SK-N-SH (cell line): ENCODE measurements at regions of chr22 and their contacts with region 1.

Region 1: DNA sequence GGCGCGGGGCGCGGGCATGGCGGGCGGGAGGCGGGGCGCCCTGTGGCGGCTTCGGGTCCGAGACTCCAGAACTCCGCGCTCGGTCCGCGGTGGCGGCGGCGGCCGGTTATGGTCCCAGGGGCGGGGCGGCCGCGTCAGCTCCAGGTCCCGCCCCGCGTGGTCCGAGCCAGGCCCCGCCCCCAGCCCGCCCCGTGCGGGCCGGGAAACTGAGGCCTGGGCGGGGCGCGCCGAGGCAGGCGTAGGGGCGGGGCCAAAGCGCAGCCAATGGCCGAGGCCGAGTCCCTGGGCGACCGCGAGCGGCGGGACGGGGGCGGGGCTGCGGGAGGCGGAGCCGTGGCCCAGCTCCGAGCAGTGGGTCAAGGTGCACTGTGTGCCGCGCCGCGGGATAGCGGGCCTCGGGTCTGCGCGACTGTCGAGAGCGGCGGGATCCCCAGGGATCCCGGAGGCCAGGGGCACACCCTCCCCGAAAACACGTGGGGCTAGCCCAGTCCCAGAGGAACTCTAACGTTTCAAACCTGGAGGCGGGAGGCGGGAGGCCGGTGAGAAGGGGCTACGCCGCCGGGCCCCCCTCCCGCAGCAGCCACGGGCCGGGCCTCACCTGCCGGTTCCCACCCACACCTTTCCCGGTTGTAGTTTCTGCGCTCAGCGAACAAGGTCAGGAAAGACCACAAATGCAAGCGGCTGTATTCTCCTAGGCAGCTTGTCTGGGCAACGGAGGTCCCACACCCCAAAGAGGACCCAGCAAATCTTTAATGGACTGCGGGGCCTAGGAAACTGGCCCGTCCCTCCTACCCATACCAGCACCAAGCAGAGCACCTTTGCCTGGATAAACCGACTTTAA is at the start of gene SLC25A1:
- DNase-seq: peak; percentile 97
- H3K4me3 ChIP-seq: peak within 1 kb of the TSS; percentile 80 to 84
- H3K27ac ChIP-seq: peak within 1 kb of the TSS; percentile 37 to 89; a peak in 3 of 4 replicates
- H3K4me1 ChIP-seq: peaks cover 16 to 44% of the 10 kb centered on the region in 2 experiments; a peak in 3 of 4 replicates
- H3K27me3 ChIP-seq: no peaks in the 10 kb centered on the region
- CTCF ChIP-seq: no peak
- EP300 ChIP-seq: no peak
- RAD21 ChIP-seq: no peak
- polyA plus RNA-seq, gene SLC25A1: 34.2 and 44.7 TPM in 2 replicates

Region 2: GRCh38 chr22:19097518-19097917 is 81.4 kb before region 1 on chr22:
- CTCF ChIA-PET with region 1: no interaction called
- POLR2A ChIA-PET with region 1: no interaction called
- DNase-seq: no peak
- H3K4me3 ChIP-seq: no peak overlapping the region
- H3K27ac ChIP-seq: no peak overlapping the region
- H3K4me1 ChIP-seq: no peaks in the 10 kb centered on the region; a peak in 1 of 4 replicates
- H3K27me3 ChIP-seq: no peaks in the 10 kb centered on the region
- CTCF ChIP-seq: no peak
- EP300 ChIP-seq: no peak
- RAD21 ChIP-seq: no peak

Region 3: DNA sequence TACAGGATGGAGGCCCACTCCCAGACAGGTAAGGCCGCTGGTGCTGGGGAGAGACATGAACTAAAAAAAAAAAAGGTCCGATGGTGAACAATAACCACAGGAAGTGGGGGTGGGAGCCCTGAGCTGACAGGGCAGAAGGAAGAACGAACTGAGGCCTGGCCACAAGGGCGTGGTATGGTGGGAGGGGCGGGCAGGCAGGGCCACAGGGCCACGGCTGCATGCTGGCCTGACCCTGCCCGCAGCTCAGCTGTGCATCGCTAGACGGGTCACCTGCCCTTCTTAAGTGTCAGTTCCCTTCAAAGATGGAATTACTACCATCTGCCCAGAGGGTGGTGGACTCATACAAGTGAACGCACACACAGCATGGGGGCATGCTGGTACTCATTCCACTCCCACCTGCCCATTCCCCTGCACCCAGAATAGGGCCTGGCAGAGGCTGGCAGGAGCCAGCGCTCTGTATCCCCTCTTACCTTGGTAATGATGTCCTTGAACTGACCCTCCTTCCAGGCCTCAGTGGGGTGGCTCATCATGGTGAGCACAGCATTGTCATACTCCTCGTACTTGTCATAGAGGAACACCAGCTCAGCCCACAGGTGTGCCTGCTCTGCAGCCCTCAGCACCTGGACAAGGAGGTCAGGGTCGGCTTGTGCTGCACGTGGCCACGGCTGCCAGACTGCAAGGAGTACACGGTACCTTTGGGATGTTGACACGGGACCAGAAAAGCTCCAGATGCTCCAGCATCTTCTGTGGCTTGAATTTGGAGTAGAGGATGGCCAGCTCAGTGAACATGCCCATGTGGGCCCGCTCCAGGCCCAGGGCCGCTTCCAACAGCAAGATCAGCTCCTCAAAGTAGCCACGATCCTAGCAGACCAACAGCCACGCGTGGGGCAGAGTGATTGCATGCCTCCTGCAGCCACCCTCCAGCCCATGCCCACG is 17.2 kb after region 1 on chr22:
- CTCF ChIA-PET with region 1: interaction called, 28 read pairs
- POLR2A ChIA-PET with region 1: interaction called, 4 read pairs
- DNase-seq: no peak
- H3K4me3 ChIP-seq: no peak overlapping the region
- H3K27ac ChIP-seq: peak overlapping the region in 1 of 2 experiments; percentile 34; a peak in 1 of 4 replicates
- H3K4me1 ChIP-seq: peaks cover 0 to 32% of the 10 kb centered on the region in 2 experiments; a peak in 2 of 4 replicates
- H3K27me3 ChIP-seq: no peaks in the 10 kb centered on the region
- CTCF ChIP-seq: no peak
- EP300 ChIP-seq: no peak
- RAD21 ChIP-seq: no peak

Region 4: DNA sequence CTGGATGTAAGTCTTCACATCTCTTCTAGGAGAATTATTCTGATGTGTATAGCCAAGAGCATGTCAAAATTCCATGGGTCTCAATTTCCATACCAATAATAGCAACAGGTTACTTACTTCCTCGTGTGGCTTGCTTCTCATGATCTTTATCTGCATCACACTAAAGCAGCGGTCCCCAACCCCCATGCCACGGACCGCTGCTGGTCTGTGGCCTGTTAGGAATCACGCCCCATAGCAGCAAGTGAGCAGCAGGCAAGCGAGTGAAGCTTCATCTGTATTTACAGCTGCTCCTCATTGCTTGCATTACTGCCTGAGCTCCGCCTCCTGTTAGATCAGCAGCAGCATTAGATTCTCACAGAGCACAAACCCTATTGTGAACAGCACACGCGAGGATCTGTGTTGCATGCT is 28.5 kb after region 1 on chr22:
- CTCF ChIA-PET with region 1: interaction called, 23 read pairs
- POLR2A ChIA-PET with region 1: interaction called, 6 read pairs
- DNase-seq: no peak
- H3K4me3 ChIP-seq: no peak overlapping the region
- H3K27ac ChIP-seq: peak overlapping the region in 1 of 2 experiments; percentile 98; a peak in 2 of 4 replicates
- H3K4me1 ChIP-seq: peaks cover 0 to 45% of the 10 kb centered on the region in 2 experiments; a peak in 2 of 4 replicates
- H3K27me3 ChIP-seq: no peaks in the 10 kb centered on the region
- CTCF ChIP-seq: no peak
- EP300 ChIP-seq: no peak
- RAD21 ChIP-seq: no peak

Region 5: GRCh38 chr22:19287076-19287724 is 108.3 kb after region 1 on chr22:
- CTCF ChIA-PET with region 1: interaction called, 10 read pairs
- POLR2A ChIA-PET with region 1: interaction called, 5 read pairs
- DNase-seq: no peak
- H3K4me3 ChIP-seq: no peak overlapping the region
- H3K27ac ChIP-seq: peak overlapping the region in 1 of 2 experiments; percentile 22; a peak in 1 of 4 replicates
- H3K4me1 ChIP-seq: peaks cover 9 to 32% of the 10 kb centered on the region in 2 experiments
- H3K27me3 ChIP-seq: no peaks in the 10 kb centered on the region
- CTCF ChIP-seq: no peak
- EP300 ChIP-seq: no peak
- RAD21 ChIP-seq: no peak

Region 6: DNA sequence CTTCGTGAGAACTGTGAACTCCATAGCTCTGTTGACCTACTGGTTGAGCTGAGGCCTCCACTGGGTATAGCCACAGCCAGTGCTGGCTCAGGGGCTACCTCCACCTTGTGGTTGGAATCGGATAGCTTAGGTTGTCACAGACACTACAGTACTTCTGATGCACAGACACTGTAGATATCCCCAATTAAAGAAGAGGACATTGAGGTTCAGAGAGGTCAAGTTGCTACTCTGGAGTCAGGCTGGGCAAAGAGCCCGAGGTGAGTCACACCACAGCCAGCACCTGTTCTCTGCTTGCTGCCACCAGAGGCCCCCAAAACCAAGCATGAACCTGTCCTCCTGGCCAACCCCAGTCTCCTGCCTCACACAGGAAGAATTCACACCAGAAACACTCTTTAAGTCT is 294.7 kb after region 1 on chr22:
- CTCF ChIA-PET with region 1: interaction called, 19 read pairs
- POLR2A ChIA-PET with region 1: no interaction called
- DNase-seq: no peak
- H3K4me3 ChIP-seq: no peak overlapping the region
- H3K27ac ChIP-seq: no peak overlapping the region
- H3K4me1 ChIP-seq: peaks cover 5 to 8% of the 10 kb centered on the region in 2 experiments; a peak in 3 of 4 replicates
- H3K27me3 ChIP-seq: no peaks in the 10 kb centered on the region
- CTCF ChIP-seq: no peak; the same call in 1 of the 2 replicates
- EP300 ChIP-seq: no peak
- RAD21 ChIP-seq: no peak

Region 7: GRCh38 chr22:19479357-19480172 is 300.7 kb after region 1 on chr22 and contains the start of gene CDC45:
- CTCF ChIA-PET with region 1: interaction called, 19 read pairs
- POLR2A ChIA-PET with region 1: no interaction called
- DNase-seq: peak; percentile 95
- H3K4me3 ChIP-seq: peak within 1 kb of the TSS; percentile 94 to 95
- H3K27ac ChIP-seq: peak within 1 kb of the TSS; percentile 95 to 99
- H3K4me1 ChIP-seq: peaks cover 5 to 16% of the 10 kb centered on the region in 2 experiments; a peak in 3 of 4 replicates
- H3K27me3 ChIP-seq: no peaks in the 10 kb centered on the region
- CTCF ChIP-seq: no peak
- EP300 ChIP-seq: no peak
- RAD21 ChIP-seq: no peak
- polyA plus RNA-seq, gene CDC45: 23.6 and 26.4 TPM in 2 replicates